ENCODE measurements at regions of chr5 and their contacts with region 1.

Region 1: DNA sequence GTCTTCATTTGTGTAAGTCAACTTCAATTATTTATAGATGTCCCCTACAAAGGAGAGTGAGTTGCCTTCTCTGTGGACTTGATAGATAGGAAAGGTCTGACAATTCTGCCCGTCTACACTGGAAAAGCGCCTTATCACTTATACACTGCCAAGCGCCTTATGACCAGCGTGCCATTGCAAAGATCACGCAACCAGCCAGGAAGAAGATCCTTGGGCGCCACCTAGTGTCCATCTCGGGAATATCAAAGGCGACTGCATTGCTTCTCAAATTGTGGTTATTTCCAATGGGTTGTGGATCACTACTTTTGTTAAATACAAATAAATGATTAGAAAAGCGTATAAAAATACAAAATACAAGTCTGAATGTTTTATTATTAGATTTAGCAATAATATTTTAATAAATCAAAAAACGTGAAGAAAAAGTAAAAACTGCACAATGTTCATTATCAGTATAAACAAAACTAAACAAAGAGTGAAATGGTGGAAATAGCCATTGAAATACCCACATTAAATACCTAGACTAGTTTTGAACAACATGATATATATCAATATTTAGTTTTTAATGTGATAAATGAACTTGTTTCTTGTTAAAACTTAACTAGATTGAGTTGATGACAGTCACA is 27.8 kb downstream of the SUB1 start:
- DNase-seq: peak; percentile 77 to 86
- ATAC-seq: peak; percentile 70 to 90 (median 84)
- H3K4me3 ChIP-seq: no peak overlapping the region
- H3K27ac ChIP-seq: no peak overlapping the region
- H3K4me1 ChIP-seq: peaks cover 10% of the 10 kb centered on the region
- H3K27me3 ChIP-seq: no peaks in the 10 kb centered on the region
- CTCF ChIP-seq: peak; percentile 92

Region 2: GRCh38 chr5:32223946-32224608 is 389.1 kb before region 1 on chr5:
- intact Hi-C with region 1: loop called in 1 of 2 experiments (anchors 5 kb)
- DNase-seq: no peak
- ATAC-seq: peak; percentile 66 to 83 (median 74)
- H3K4me3 ChIP-seq: no peak overlapping the region
- H3K27ac ChIP-seq: peak overlapping the region; percentile 11
- H3K4me1 ChIP-seq: peaks cover 8% of the 10 kb centered on the region
- H3K27me3 ChIP-seq: no peaks in the 10 kb centered on the region
- CTCF ChIP-seq: no peak

Region 3: GRCh38 chr5:32232441-32233219 is 380.5 kb before region 1 on chr5:
- intact Hi-C with region 1: loop called (anchors 5 to 10 kb)
- DNase-seq: peak; percentile 75 to 86
- ATAC-seq: peak; percentile 81 to 96 (median 89)
- H3K4me3 ChIP-seq: no peak overlapping the region
- H3K27ac ChIP-seq: no peak overlapping the region
- H3K4me1 ChIP-seq: peaks cover 12% of the 10 kb centered on the region
- H3K27me3 ChIP-seq: no peaks in the 10 kb centered on the region
- CTCF ChIP-seq: peak; percentile 82

Region 4: GRCh38 chr5:32489791-32490582 is 123.2 kb before region 1 on chr5:
- intact Hi-C with region 1: loop called (anchors 1 to 2 kb)
- DNase-seq: peak; percentile 80 to 87
- ATAC-seq: peak; percentile 63 to 85 (median 68)
- H3K4me3 ChIP-seq: no peak overlapping the region
- H3K27ac ChIP-seq: no peak overlapping the region
- H3K4me1 ChIP-seq: no peaks in the 10 kb centered on the region
- H3K27me3 ChIP-seq: no peaks in the 10 kb centered on the region
- CTCF ChIP-seq: peak; percentile 74

Region 5: GRCh38 chr5:32837211-32837610 is 224.1 kb after region 1 on chr5:
- intact Hi-C with region 1: no loop called
- DNase-seq: no peak
- ATAC-seq: no peak
- H3K4me3 ChIP-seq: no peak overlapping the region
- H3K27ac ChIP-seq: no peak overlapping the region
- H3K4me1 ChIP-seq: no peaks in the 10 kb centered on the region
- H3K27me3 ChIP-seq: peaks cover 0 to 3% (median 0%) of the 10 kb centered on the region in 3 donors
- CTCF ChIP-seq: no peak

Measured in psoas muscle (tissue), 8 donors.